Activated naive CD4-positive, alpha-beta T cell treated with anti-CD3 and anti-CD28 coated beads for 36 hours (primary cell): ENCODE measurements at regions of chr12 and their contacts with region 1.

Region 1: DNA sequence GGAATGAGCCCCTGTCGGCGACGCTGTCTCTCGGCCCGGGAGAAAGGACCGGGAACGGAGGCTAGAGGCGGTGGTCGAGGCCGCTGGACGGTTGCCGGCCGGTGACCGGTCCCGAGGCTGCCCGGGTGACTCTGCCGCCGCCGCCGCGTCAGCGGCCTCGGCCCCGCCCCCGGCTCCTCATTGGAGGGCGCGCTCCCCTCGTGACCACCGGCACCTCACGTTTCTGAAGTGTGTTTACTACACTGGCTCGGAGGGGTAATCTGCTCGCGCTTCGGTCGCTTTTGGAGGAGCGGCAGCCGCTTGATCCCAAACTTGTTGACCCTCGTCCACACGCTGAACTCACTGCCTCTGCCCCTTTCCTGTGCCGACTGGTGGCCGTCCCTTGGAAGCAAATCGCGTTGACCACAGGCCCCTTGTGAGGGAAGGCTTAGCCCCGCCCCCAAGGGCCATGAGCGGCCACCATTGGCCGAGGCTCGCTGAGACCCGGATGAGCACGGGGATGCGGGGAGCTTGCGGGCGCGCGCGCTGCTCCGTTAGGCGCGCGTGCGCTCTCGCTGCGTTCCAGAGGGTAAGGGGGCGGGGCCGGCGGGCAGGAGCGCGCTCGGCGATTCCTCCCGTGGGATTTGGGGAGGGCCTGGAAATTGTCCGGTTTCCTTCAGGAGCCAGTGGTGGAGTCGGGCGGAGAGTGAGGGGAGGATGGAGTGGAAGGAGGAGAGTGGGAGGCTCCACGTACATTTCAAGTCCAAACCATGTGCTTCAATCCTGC is at the start of gene CRY1:
- DNase-seq: peak; percentile 93
- H3K4me3 Mint-ChIP-seq: no peak within 1 kb of the TSS
- H3K27ac Mint-ChIP-seq: no peak within 1 kb of the TSS
- H3K4me1 Mint-ChIP-seq: peaks cover 4% of the 10 kb centered on the region
- H3K27me3 Mint-ChIP-seq: peaks cover 3% of the 10 kb centered on the region
- total RNA-seq, gene CRY1: 15.2 to 17.5 TPM

Region 2: GRCh38 chr12:106302401-106303201 is 791.0 kb before region 1 on chr12 and contains the start of gene TCP11L2:
- CTCF ChIA-PET with region 1: no interaction called
- intact Hi-C with region 1: loop called (anchors 2 kb)
- DNase-seq: peak; percentile 88
- H3K4me3 Mint-ChIP-seq: peak within 1 kb of the TSS; percentile 93
- H3K27ac Mint-ChIP-seq: peak within 1 kb of the TSS; percentile 99
- H3K4me1 Mint-ChIP-seq: peaks cover 55% of the 10 kb centered on the region
- H3K27me3 Mint-ChIP-seq: no peaks in the 10 kb centered on the region
- total RNA-seq, gene TCP11L2: 9.2 to 10.3 TPM

Region 3: DNA sequence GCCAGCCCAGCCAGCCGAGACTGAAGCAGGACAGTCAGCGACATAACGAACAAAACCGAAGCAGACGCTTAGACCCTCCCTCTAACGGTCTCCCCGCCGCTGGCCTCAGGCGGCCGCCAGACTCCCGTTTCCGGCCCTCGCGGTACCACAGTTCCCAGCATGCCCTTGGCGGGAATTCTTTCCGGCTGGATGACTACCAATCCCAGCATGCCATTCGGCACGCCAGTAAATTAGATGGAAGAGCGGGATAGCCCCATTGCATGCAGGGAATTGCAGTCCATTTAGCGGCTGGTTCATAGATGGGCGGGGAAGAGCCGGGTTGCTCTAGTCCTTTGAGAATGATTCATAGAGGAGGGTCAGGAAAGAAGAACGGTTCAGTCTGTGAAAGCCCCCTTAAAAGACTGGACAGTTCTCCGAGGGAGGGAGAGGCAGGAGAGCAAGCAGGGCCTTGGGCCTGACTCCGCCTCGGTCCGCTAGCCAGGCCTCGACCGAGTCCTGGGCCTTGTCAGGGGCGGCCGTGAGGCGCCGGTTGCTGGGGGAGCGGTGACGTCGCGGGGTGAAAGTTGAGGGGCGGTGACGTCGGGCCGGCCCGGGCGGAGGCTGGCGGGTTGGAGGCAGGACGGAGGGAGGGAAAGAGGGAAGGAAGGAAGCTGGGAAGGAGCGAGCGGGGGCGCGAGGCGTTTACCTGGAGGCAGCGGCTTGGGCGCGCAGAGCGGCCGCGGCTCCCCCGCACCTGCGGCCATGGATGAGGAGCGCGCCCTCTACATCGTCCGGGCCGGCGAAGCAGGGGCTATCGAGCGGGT is 319.4 kb before region 1 on chr12 and contains the start of gene RIC8B:
- CTCF ChIA-PET with region 1: no interaction called
- intact Hi-C with region 1: loop called (anchors 1 kb)
- DNase-seq: peak; percentile 92
- H3K4me3 Mint-ChIP-seq: peak within 1 kb of the TSS; percentile 99
- H3K27ac Mint-ChIP-seq: peak within 1 kb of the TSS; percentile 97
- H3K4me1 Mint-ChIP-seq: peaks cover 22% of the 10 kb centered on the region
- H3K27me3 Mint-ChIP-seq: no peaks in the 10 kb centered on the region
- total RNA-seq, gene RIC8B: 7.3 to 8.1 TPM

Region 4: GRCh38 chr12:107045186-107045585 is 48.4 kb before region 1 on chr12:
- CTCF ChIA-PET with region 1: no interaction called
- intact Hi-C with region 1: no loop called
- DNase-seq: no peak
- H3K4me3 Mint-ChIP-seq: no peak overlapping the region
- H3K27ac Mint-ChIP-seq: no peak overlapping the region
- H3K4me1 Mint-ChIP-seq: peaks cover 11% of the 10 kb centered on the region
- H3K27me3 Mint-ChIP-seq: no peaks in the 10 kb centered on the region

Region 5: DNA sequence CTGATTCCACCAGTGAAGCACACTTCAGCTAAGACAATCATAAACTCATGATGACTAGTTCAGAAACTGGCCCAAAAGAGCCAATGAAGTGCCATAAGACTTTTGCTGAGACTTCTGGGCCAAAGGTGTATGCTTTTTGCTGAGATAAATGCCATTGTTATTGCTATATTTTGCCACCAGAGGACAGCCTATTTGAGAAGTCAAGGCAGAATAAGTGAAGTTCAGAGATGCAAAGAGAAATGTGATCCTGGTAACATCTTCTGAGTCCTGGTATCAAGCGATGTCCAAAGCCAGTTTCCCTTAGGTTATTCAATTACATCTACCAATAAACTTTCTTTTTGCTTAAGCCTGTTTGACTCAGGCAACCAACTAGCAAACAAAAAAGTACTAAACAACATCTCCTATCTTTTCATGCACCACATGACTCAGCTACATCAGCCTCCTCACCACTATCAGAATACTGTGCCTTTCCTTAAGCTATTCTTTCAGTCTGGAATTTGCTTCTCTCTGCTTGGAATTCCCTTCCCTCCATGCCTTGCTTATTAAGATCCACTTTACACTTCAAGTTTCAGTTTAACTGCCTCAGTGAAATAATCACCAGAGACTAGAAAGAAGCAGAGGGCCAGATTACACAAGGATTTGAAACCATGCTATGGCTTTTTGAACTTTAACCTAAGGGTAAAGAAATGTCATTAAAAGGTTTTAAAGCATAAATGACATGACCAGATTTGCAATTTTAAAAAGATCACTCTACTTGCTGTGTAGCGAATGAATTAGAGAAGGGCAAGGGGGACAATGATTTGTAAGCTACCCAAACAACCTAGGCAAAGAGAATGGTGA is 14.2 kb before region 1 on chr12:
- CTCF ChIA-PET with region 1: interaction called, 7 read pairs
- intact Hi-C with region 1: loop called (anchors 1 kb)
- DNase-seq: peak; percentile 17
- H3K4me3 Mint-ChIP-seq: no peak overlapping the region
- H3K27ac Mint-ChIP-seq: no peak overlapping the region
- H3K4me1 Mint-ChIP-seq: peaks cover 14% of the 10 kb centered on the region
- H3K27me3 Mint-ChIP-seq: no peaks in the 10 kb centered on the region

Region 6: GRCh38 chr12:107372229-107372658 is 278.6 kb after region 1 on chr12:
- CTCF ChIA-PET with region 1: no interaction called
- intact Hi-C with region 1: loop called (anchors 1 kb)
- DNase-seq: peak; percentile 72
- H3K4me3 Mint-ChIP-seq: peak overlapping the region; percentile 32
- H3K27ac Mint-ChIP-seq: peak overlapping the region; percentile 83
- H3K4me1 Mint-ChIP-seq: peaks cover 77% of the 10 kb centered on the region
- H3K27me3 Mint-ChIP-seq: no peaks in the 10 kb centered on the region

Region 7: DNA sequence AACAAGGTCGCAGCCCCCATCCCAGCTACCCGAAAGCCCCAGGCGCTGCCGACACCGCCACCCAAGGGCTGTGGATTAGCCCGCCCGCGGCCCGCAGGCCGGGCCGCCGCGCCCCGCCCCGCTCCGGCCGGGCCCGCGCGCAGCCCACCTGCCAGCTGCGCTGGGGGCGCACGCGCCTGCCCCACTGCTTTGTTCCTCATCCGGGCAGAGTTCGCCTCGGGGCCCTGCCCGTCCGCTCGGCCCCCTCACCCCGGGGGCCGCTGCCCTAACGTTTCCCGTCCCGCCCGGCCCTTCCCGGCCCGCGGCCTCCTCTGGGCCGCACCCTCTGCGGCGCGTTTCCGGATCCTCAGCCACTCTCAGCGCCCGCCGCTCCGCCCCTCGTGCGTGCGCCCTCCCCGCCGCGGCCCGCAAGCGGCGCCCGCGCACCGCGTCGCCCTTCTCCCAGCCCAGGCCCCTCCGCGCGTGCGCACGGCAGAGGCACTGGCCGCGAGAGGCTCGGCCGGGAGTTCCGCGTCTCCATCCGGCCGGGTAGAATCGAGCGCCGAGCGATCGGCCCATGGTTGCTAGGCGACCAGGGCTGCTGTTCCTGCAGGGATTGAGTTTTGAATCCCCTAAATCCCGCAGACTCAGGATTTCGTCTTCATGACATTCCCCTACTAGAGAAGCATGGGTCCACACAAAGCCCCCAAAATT is 667.4 kb after region 1 on chr12 and contains the start of gene PRDM4:
- CTCF ChIA-PET with region 1: no interaction called
- intact Hi-C with region 1: loop called (anchors 2 kb)
- DNase-seq: peak; percentile 92
- H3K4me3 Mint-ChIP-seq: peak within 1 kb of the TSS; percentile 93
- H3K27ac Mint-ChIP-seq: peak within 1 kb of the TSS; percentile 83
- H3K4me1 Mint-ChIP-seq: peaks cover 24% of the 10 kb centered on the region
- H3K27me3 Mint-ChIP-seq: no peaks in the 10 kb centered on the region
- total RNA-seq, gene PRDM4: 18.8 to 20.6 TPM